ENCODE measurements at regions of chr20 and their contacts with region 1.

Region 1: GRCh38 chr20:47164140-47164539 is 192.4 kb downstream of the ZMYND8 start:
- DNase-seq: no peak
- H3K4me3 ChIP-seq: no peak overlapping the region
- H3K27ac ChIP-seq: no peak overlapping the region
- H3K4me1 ChIP-seq: no peaks in the 10 kb centered on the region
- H3K27me3 ChIP-seq: no peaks in the 10 kb centered on the region
- CTCF ChIP-seq: no peak
- POLR2A ChIP-seq: no peak

Region 2: GRCh38 chr20:48329635-48330277 is 1165.6 kb after region 1 on chr20:
- intact Hi-C with region 1: loop called (anchors 5 kb)
- DNase-seq: no peak
- H3K4me3 ChIP-seq: no peak overlapping the region
- H3K27ac ChIP-seq: no peak overlapping the region
- H3K4me1 ChIP-seq: no peaks in the 10 kb centered on the region
- H3K27me3 ChIP-seq: no peaks in the 10 kb centered on the region
- CTCF ChIP-seq: no peak
- POLR2A ChIP-seq: no peak